ENCODE measurements at regions of chr11 and their contacts with region 1.

Region 1: GRCh38 chr11:33362051-33362910 is 105.1 kb downstream of the HIPK3 start:
- DNase-seq: peak; percentile 42
- H3K4me3 ChIP-seq: no peak overlapping the region
- H3K27ac ChIP-seq: no peak overlapping the region
- H3K4me1 ChIP-seq: no peaks in the 10 kb centered on the region
- H3K27me3 ChIP-seq: no peaks in the 10 kb centered on the region
- CTCF ChIP-seq: peak; percentile 46 to 49

Region 2: DNA sequence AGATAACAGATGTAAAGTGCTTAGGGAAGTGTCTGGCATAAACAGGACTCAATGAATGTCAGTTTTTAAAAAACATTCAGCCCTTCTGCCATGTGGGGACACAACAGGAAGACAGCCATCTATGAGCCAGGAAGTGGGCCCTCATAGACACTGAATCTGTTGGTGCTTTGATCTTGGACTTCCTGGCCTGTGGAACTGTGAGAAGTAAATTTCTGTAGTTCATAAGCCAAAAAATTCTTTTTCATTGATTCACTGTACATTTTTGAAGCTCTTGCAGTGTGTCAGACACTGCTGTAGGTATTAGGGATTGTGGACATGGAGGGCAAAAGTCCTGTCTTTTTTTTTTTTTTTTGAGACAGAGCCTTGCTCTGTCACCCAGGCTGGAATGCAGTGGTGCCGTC is 83.5 kb after region 1 on chr11:
- CTCF ChIA-PET with region 1: no interaction called
- dilution Hi-C with region 1: no loop called
- in situ Hi-C with region 1: no loop called
- intact Hi-C with region 1: no loop called
- DNase-seq: no peak
- H3K4me3 ChIP-seq: no peak overlapping the region
- H3K27ac ChIP-seq: no peak overlapping the region
- H3K4me1 ChIP-seq: peaks cover 10% of the 10 kb centered on the region
- H3K27me3 ChIP-seq: no peaks in the 10 kb centered on the region
- CTCF ChIP-seq: no peak

Region 3: DNA sequence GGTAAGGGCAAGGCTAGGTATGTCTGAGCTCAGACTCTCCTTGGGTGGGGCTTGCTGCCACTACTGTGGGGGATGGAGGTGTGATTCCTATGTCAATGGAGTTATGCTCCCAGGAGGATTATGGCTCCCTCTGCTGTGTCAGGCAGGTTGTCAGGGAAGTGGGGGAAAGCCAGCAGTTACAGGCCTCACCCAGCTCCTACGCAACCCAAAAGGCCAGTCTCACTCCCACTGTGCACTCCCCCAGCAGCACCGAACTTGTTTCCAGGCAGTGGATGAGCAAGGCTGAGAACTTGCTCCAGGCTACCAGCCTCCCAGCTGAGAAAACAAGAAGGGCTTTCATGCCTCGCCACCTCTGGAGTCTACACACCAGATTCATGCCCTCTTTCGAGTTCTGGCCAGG is 320.2 kb after region 1 on chr11:
- CTCF ChIA-PET with region 1: interaction called, 3 read pairs
- dilution Hi-C with region 1: loop called (anchors 25 kb)
- in situ Hi-C with region 1: loop called (anchors 5 kb)
- intact Hi-C with region 1: loop called (anchors 1 kb)
- DNase-seq: peak; percentile 97
- H3K4me3 ChIP-seq: no peak overlapping the region
- H3K27ac ChIP-seq: peak overlapping the region; percentile 17
- H3K4me1 ChIP-seq: peaks cover 16% of the 10 kb centered on the region
- H3K27me3 ChIP-seq: no peaks in the 10 kb centered on the region
- CTCF ChIP-seq: peak; percentile 35 to 69